ENCODE measurements at regions of chr3 and their contacts with region 1.

Region 1: GRCh38 chr3:23740517-23740965 is 65.2 kb upstream of the UBE2E1 start:
- DNase-seq: peak; percentile 93
- H3K4me3 ChIP-seq: peak overlapping the region in 1 of 3 experiments; percentile 23
- H3K27ac ChIP-seq: peak overlapping the region; percentile 66
- H3K4me1 ChIP-seq: peaks cover 38% of the 10 kb centered on the region
- H3K27me3 ChIP-seq: no peaks in the 10 kb centered on the region
- CTCF ChIP-seq: no peak
- POLR2A ChIP-seq: peak; percentile 21

Region 2: GRCh38 chr3:23324745-23325144 is 415.8 kb before region 1 on chr3:
- CTCF ChIA-PET with region 1: no interaction called
- POLR2A ChIA-PET with region 1: no interaction called
- dilution Hi-C with region 1: no loop called
- intact Hi-C with region 1: loop called (anchors 10 kb)
- DNase-seq: peak; percentile 77
- H3K4me3 ChIP-seq: peak overlapping the region in 2 of 3 experiments; percentile 20 to 66
- H3K27ac ChIP-seq: peak overlapping the region; percentile 82
- H3K4me1 ChIP-seq: peaks cover 23% of the 10 kb centered on the region
- H3K27me3 ChIP-seq: no peaks in the 10 kb centered on the region
- CTCF ChIP-seq: no peak
- POLR2A ChIP-seq: no peak

Region 3: GRCh38 chr3:23611737-23612295 is 128.7 kb before region 1 on chr3:
- CTCF ChIA-PET with region 1: no interaction called
- POLR2A ChIA-PET with region 1: no interaction called
- dilution Hi-C with region 1: no loop called
- intact Hi-C with region 1: loop called (anchors 5 kb)
- DNase-seq: peak; percentile 63
- H3K4me3 ChIP-seq: no peak overlapping the region
- H3K27ac ChIP-seq: peak overlapping the region; percentile 28
- H3K4me1 ChIP-seq: peaks cover 18% of the 10 kb centered on the region
- H3K27me3 ChIP-seq: no peaks in the 10 kb centered on the region
- CTCF ChIP-seq: no peak
- POLR2A ChIP-seq: no peak

Region 4: DNA sequence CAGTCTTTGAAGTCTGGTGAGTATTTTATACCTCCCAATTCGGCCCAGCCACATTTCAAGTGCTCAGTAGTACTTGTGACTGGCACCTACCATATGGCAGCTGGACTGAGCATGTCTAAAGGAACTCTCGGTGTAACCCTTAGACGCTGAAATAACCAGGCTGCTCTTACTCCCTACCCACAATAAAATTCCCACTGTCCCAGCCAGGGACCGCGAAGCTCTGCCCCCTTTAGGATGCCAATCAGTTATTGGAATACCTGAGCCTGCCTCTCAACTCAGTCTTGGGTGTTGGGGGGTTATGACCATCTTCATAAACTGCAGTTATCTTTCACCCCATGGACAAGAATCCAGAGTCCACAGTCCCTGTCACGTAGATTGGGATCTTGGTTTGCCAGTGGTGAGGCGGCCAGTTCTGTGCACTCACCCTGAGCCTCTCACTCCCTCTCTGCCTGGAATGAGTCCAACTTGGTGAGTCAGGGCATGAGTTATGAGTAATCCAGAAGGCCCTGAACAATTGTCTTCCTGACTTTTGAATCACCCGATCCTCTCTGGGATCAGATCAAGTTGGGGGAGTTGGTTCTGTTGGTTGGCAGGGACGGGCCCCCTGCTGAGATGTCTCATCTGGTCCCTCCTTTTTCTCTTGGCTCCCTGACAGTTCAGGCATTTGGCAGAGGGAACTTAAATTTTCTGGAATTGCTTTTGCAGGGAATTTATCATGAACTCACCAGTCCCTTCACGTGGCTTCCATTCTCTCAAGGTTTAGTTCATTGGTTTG is 54.9 kb before region 1 on chr3:
- CTCF ChIA-PET with region 1: no interaction called
- POLR2A ChIA-PET with region 1: no interaction called
- dilution Hi-C with region 1: no loop called
- intact Hi-C with region 1: loop called (anchors 1 kb)
- DNase-seq: peak; percentile 97
- H3K4me3 ChIP-seq: no peak overlapping the region
- H3K27ac ChIP-seq: peak overlapping the region; percentile 8
- H3K4me1 ChIP-seq: peaks cover 12% of the 10 kb centered on the region
- H3K27me3 ChIP-seq: no peaks in the 10 kb centered on the region
- CTCF ChIP-seq: no peak
- POLR2A ChIP-seq: no peak

Region 5: GRCh38 chr3:23840521-23840920 is 100.0 kb after region 1 on chr3:
- CTCF ChIA-PET with region 1: no interaction called
- POLR2A ChIA-PET with region 1: no interaction called
- dilution Hi-C with region 1: no loop called
- intact Hi-C with region 1: no loop called
- DNase-seq: no peak
- H3K4me3 ChIP-seq: no peak overlapping the region
- H3K27ac ChIP-seq: no peak overlapping the region
- H3K4me1 ChIP-seq: no peaks in the 10 kb centered on the region
- H3K27me3 ChIP-seq: no peaks in the 10 kb centered on the region
- CTCF ChIP-seq: no peak
- POLR2A ChIP-seq: no peak